CD14-positive monocyte (primary cell): ENCODE measurements at regions of chr19 and their contacts with region 1.

Region 1: DNA sequence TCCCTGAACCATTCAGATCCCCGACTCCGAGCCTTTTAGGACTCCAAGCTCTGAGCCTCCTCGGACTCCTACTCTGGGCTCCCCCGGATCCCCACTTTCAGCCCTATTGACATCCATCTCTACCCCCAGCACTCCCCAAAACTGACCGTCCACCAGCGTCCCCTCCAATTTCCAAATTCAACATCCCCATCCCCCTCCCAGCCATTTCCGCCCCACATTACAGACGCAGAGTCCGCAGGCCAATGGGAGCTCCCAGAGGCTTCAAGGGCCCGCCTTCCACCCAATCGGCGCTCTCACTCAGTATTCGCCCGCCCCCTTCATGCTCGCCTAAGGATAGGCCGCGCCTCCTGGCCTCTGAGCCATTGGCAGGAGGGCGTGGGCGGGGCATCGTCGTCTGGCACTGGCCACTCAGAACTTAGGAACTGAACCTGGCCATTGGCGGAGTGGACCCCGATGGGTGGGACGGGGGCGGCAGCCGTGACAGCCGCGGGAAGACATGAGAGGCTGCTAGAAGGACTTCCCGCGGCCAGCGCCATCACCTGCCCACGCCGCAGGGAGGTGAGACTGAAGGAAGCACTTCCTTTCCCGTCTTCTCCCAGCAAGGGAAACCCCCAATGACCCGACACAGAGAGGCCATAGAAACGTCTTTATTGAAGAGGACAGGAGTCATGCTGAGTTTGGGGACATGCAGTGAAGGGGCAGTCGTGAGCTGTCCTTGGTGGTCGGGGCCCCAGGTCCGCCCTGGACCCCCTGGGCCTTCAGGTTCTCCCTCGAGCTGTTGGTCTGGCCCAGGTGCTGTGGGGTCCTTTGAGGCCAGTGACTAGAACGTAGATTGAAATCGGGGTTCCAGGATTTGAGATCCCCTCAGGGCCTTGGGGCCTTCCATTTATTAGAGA is at the start of gene ALKBH6:
- DNase-seq: peak; percentile 96 to 99 (median 97)
- H3K4me3 ChIP-seq: peak within 1 kb of the TSS; percentile 71 to 89 (median 83)
- H3K4me3 Mint-ChIP-seq: peak within 1 kb of the TSS; percentile 97 to 99
- H3K27ac ChIP-seq: peak within 1 kb of the TSS; percentile 56 to 86
- H3K27ac Mint-ChIP-seq: peak within 1 kb of the TSS; percentile 94 to 99 (median 96)
- H3K4me1 ChIP-seq: peaks cover 14 to 24% of the 10 kb centered on the region in 2 donors
- H3K4me1 Mint-ChIP-seq: peaks cover 31% of the 10 kb centered on the region
- H3K27me3 ChIP-seq: peaks cover 0 to 8% of the 10 kb centered on the region in 2 donors
- H3K27me3 Mint-ChIP-seq: peaks cover 10 to 12% (median 12%) of the 10 kb centered on the region in 3 donors
- CTCF ChIP-seq: no peak
- polyA plus RNA-seq, gene ALKBH6: 13.1 to 29.3 (median 16.1) TPM

Region 2: GRCh38 chr19:35757749-35758608 is 256.3 kb before region 1 on chr19 and contains the start of gene PROSER3:
- intact Hi-C with region 1: loop called (anchors 5 kb)
- DNase-seq: peak; percentile 98 to 99 (median 99)
- H3K4me3 ChIP-seq: peak within 1 kb of the TSS; percentile 91 to 100 (median 96)
- H3K4me3 Mint-ChIP-seq: peak within 1 kb of the TSS; percentile 93 to 94
- H3K27ac ChIP-seq: peak within 1 kb of the TSS; percentile 74 to 95
- H3K27ac Mint-ChIP-seq: peak within 1 kb of the TSS; percentile 76 to 96 (median 93)
- H3K4me1 ChIP-seq: peaks cover 29 to 41% of the 10 kb centered on the region in 2 donors
- H3K4me1 Mint-ChIP-seq: peaks cover 32% of the 10 kb centered on the region
- H3K27me3 ChIP-seq: peaks cover 9 to 21% of the 10 kb centered on the region in 2 donors
- H3K27me3 Mint-ChIP-seq: peaks cover 18 to 30% (median 25%) of the 10 kb centered on the region in 3 donors
- CTCF ChIP-seq: no peak
- polyA plus RNA-seq, gene PROSER3: 1.8 to 14.7 (median 2.9) TPM